ENCODE measurements at regions of chr14 and their contacts with region 1.

Region 1: DNA sequence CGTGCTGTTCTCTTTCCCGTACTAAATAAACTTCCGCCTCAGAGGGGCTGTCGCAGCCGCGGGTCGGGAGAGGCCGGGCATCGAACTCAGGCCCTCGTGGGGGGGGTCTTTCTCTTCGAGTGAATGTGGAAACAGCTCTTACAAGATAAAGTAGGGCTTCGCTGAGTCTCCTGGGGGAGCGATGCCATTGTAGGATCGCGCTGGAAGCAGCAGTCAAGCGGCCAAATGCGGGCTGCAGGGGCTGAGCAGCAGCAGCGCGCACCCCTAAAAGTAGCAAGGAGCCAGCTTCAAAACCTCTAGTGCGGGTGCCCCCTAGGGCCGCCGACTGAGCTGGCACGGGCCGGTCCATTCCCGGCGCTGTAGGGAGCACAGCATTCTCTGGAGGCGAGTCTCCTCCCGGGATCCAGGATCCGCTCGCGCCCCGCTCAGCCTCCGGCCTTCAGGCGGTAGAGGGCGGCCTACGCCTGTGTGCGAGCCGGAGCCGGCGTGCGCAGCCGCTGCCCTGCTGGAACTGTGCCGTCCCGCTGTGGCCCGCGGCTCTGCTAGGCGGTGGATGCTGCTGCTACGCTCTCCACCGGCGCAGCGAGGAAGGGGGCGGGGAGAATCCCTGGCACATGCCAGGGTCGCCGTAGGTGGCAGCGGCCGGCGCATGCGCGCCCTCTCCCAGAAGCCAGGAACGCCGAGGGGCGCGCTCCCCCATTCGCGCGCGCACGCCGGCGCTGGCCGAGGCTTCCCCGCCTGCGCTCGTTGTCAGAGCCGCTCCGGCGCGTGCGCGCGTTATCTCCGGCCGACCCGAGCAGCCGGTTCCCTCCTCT is at the start of gene FUT8:
- DNase-seq: peak; percentile 93
- H3K4me3 Mint-ChIP-seq: peak within 1 kb of the TSS; percentile 91
- H3K27ac Mint-ChIP-seq: peak within 1 kb of the TSS; percentile 93
- H3K4me1 Mint-ChIP-seq: peaks cover 38% of the 10 kb centered on the region
- H3K27me3 Mint-ChIP-seq: no peaks in the 10 kb centered on the region
- total RNA-seq, gene FUT8: 85.0 to 85.5 TPM

Region 2: GRCh38 chr14:65206448-65207096 is 205.7 kb before region 1 on chr14:
- CTCF ChIA-PET with region 1: interaction called, 11 read pairs
- POLR2A ChIA-PET with region 1: interaction called, 47 read pairs
- DNase-seq: no peak
- H3K4me3 Mint-ChIP-seq: peak overlapping the region; percentile 60
- H3K27ac Mint-ChIP-seq: peak overlapping the region; percentile 95
- H3K4me1 Mint-ChIP-seq: peaks cover 65% of the 10 kb centered on the region
- H3K27me3 Mint-ChIP-seq: no peaks in the 10 kb centered on the region

Region 3: GRCh38 chr14:65287264-65288131 is 124.7 kb before region 1 on chr14:
- CTCF ChIA-PET with region 1: interaction called, 35 read pairs
- POLR2A ChIA-PET with region 1: interaction called, 35 read pairs
- DNase-seq: peak; percentile 63
- H3K4me3 Mint-ChIP-seq: peak overlapping the region; percentile 73
- H3K27ac Mint-ChIP-seq: peak overlapping the region; percentile 94
- H3K4me1 Mint-ChIP-seq: peaks cover 71% of the 10 kb centered on the region
- H3K27me3 Mint-ChIP-seq: no peaks in the 10 kb centered on the region

Region 4: GRCh38 chr14:65517635-65518542 is 105.7 kb after region 1 on chr14:
- CTCF ChIA-PET with region 1: no interaction called
- POLR2A ChIA-PET with region 1: no interaction called
- DNase-seq: no peak
- H3K4me3 Mint-ChIP-seq: no peak overlapping the region
- H3K27ac Mint-ChIP-seq: peak overlapping the region; percentile 53
- H3K4me1 Mint-ChIP-seq: peaks cover 29% of the 10 kb centered on the region
- H3K27me3 Mint-ChIP-seq: no peaks in the 10 kb centered on the region

Region 5: DNA sequence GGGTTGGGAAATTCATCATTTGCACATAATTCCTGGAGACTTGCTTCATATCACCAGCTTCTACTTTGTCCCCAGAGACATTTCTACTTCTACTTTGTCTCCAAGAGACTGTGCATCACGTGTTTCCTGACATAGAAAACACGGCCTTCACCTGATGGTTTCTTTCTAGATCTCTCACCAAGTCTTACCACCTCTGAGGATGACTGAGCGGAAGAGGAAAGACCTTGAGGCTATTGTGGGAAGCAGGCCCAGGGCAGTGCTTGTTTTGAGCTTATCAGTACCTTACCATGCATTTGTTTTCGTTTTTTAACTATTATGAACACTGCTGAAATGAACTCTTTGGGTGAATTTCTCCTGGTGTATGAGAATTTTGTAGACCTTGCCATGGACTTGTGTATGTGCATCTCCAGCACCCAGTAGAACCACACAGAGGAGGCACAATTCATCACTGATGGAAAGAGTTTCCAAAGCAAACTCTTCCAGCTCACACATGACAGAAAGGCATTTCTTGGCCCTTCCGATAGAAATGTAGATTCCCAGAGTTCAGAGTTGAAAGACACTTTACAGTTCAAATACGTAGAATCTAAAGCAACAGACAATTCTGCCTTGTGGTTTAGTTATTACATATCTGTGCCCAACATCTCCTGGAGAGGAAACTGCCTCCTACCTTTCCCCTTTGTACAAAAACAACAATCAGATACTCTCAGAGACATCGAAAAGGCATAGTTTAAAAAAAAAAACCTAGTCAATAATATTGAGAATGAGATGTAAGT is 435.0 kb after region 1 on chr14:
- CTCF ChIA-PET with region 1: interaction called, 9 read pairs
- POLR2A ChIA-PET with region 1: interaction called, 23 read pairs
- DNase-seq: peak; percentile 88
- H3K4me3 Mint-ChIP-seq: peak overlapping the region; percentile 55
- H3K27ac Mint-ChIP-seq: peak overlapping the region; percentile 97
- H3K4me1 Mint-ChIP-seq: peaks cover 76% of the 10 kb centered on the region
- H3K27me3 Mint-ChIP-seq: no peaks in the 10 kb centered on the region

Region 6: DNA sequence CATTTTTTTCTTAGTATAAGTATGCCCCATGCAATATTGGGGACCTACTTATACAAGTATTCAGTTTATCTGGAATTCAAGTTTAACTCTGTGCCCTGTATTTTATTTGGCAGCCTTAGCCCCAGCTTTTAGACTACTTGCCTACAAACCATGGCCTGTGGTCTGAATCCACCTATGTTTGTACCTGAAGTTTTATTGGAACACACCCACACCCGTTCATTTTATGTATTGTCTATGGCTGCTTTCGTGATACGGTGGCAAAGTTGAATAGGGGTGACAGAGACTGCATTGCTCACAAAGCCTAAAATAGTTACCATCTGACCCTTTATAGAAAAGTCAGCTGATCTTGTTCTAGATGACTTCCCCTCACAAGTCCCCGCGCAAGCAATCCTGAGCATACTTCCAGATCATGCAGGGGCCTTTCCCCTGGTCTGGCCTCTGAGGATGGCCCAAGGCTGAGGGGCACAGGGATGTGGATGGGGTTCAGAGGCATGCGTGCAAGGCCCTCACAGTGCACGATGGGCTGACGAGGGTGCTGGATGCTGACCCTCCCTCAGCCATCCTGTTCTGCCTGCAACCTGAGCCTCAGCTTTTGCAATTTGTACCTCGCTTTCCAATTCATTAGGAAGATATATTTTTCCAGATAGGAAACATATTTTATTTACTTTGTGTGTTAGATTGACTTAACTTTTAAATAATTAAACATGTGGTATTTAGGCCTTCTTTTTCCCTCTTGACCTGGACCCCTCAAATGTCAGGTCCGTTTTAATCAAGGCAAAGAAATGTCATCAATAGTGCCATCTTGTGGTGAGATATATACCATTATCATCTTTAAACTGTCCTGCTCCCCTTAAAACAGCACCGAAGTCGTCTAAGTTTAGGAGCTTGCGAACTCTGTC is 546.7 kb after region 1 on chr14:
- CTCF ChIA-PET with region 1: interaction called, 76 read pairs
- POLR2A ChIA-PET with region 1: interaction called, 28 read pairs
- DNase-seq: no peak
- H3K4me3 Mint-ChIP-seq: no peak overlapping the region
- H3K27ac Mint-ChIP-seq: no peak overlapping the region
- H3K4me1 Mint-ChIP-seq: peaks cover 34% of the 10 kb centered on the region
- H3K27me3 Mint-ChIP-seq: no peaks in the 10 kb centered on the region

Measured in activated CD4-positive, alpha-beta memory T cell treated with anti-CD3 and anti-CD28 coated beads, Interleukin-2, amount 10 ng/mL, durations not matched to agents 7 days and 5 days (primary cell).